Sciatic nerve (tissue), 2 donors: ENCODE measurements at regions of chr6 and their contacts with region 1.

Region 1: DNA sequence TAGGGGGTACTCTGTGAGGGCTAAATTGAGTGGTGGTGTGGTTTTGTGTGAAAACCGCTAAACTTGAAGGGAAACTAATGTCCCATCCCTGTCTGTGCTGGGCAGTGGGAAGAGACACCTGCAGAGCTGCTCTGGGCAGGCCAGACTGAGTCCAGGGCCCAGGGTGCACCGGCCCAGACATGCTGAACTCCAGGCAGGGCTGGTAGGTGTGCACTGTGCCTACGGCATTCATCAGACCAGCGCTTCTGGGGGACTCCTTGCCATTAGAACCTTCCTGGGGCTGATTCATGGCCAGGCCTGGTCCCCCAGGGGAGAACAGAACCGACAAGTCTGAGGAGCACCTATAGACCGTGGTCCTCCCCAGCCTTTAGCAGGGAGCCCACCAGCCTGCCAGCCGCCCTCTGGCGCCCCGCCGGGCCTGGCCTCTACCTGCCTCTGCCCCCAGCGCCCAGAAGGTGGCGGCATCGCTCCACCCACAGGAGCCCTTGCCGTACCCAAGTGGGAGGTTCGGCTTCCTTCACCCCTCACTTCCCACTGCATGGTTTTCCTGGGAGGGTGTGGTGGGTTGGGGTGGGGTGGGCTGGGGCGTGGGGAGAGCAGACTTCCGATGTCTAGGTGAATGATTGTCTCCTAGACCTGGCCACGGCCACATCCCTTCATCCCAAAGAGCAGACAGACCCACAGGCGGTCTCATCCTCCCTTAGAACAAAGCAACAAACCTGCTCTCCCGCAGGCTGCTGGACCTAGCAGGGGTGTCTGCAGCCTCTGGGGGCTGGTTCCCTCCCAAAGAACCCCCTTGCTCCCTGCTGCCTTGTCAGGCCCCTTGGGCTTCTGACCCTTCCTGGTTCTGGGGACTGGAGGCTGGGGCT is 15.5 kb downstream of the CCDC167 start:
- DNase-seq: peak; percentile 69
- ATAC-seq: peak; percentile 64

Region 2: DNA sequence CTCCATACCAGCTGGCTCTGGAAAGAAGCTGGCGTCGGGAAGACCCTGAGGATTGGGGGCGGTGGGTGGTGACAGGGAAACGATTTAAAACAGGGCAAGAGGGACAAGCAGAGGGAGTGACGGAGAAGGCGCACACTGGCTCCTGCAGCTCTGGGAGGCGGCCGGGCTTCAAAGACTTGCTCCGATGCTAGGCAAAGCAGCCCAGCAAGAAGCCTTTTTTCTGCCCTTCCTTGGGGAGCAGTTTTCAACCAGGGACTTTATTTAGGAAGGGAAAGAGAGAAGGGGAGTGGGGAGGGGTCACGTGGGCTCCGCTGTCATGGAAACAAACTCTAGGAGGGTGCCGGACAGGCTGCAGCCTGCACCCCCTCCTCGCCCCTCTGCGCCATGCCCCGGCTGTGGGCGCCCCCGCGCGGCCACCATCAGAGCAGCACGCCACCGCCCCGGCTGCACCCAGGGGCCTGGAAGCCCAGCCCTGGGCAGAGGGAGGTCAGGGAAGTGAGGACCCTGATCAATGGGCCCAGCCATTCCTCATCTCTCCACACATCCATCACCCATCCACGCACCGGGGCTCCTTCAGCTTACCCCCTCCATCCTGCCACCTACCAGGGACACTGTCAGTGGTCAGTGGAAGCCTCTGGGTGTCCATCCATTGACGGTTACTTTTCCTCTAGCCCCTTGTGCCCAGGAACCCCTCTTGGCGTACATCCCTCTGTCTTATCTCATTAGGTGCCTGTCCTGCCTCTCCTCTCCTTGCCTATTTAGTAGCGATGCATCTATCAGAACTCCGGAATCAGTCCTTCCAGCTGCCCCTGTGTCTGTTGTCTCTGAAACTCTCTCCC is 82.2 kb after region 1 on chr6:
- intact Hi-C with region 1: loop called (anchors 10 kb)
- DNase-seq: peak; percentile 70
- ATAC-seq: peak; percentile 82

Region 3: DNA sequence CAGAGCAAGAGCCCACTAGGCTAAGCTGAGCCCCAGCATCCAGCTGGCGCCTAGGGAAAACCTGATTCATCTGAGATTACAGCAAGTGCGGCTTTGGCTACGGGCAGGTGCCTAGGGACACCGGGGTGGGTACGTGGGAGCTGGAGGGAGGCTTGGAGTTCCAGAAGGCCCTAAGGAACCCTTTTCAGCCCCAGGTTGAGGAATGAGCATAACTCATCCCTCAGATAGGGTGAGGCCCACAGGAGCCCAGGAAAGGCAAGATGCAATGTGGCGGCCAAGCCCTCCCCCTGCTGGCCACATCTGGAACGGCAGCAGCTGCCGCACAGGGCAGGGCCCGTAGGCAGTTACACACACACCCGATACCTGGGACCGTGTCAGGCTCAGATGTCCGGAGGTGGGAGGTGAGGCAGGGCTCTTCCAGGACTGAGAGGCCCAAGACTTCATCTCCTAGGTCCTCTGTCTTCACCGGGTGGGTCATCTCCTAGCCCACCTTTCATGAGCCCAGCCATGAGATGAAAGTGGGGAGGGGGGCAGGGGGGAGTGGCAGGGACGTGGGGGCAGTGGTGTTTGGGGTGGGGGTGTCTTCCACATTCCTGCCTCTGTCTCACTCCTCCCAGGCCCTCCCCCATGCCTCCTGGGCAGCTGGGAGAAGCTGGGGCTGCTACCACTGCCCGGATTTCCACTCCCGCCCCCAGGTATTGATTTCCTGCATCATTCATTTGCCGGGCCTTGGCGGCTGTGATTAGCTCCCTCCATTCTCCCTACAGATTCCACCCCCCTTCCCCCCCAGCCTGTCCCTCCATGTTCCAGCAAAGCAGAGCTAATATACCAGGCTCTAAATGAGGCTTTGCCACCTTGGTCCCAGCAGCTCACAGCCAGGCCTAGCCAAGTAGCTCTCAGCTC is 208.0 kb after region 1 on chr6:
- intact Hi-C with region 1: loop called (anchors 10 kb)
- DNase-seq: peak; percentile 83
- ATAC-seq: peak; percentile 77